ENCODE measurements at regions of chr5 and their contacts with region 1.

Region 1: DNA sequence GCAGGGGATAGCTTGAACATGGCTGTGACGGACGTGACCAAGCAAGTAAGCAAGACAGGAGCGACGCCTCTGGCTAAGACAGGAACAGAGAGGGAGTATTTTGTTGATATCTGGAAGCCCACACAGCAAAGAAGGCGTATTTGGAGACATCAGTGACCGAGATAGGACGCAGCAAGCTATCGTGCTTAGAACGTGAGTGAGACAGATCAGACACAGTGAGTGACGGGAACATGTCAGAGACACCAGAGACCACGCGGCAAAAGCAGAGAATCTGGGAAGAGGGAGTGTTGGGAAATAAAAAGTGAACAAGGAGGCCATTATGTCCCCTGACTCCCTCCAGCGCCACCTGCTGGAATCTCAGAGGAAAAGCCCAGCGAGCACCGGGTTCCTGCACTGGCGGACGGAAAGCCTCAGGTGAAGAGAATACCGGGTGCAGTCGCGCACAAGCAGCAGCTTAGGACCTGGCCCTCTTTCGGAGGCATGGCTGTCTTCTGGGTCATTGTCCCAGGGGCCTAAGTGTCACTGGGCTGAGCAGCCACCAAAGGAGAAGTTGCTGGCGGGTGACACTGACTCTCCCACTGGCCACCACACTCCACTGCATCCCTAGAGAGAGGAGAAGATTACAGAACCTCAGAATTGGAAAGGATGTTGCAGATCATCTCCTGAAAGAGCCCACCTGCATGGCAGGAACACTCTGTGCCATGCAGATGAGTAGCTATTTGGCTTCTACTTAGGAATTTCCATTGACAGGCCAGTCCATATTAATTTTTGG is 99.1 kb downstream of the FBXO38 start:
- DNase-seq: peak; percentile 13 to 65 (median 55)
- ATAC-seq: peak; percentile 42
- H3K4me3 ChIP-seq: no peak overlapping the region
- H3K4me3 Mint-ChIP-seq: peak overlapping the region; percentile 16
- H3K27ac ChIP-seq: no peak overlapping the region
- H3K27ac Mint-ChIP-seq: no peak overlapping the region
- H3K4me1 ChIP-seq: no peaks in the 10 kb centered on the region
- H3K4me1 Mint-ChIP-seq: peaks cover 5% of the 10 kb centered on the region
- H3K27me3 ChIP-seq: no peaks in the 10 kb centered on the region
- H3K27me3 Mint-ChIP-seq: peaks cover 26% of the 10 kb centered on the region
- CTCF ChIP-seq: peak; percentile 57

Region 2: DNA sequence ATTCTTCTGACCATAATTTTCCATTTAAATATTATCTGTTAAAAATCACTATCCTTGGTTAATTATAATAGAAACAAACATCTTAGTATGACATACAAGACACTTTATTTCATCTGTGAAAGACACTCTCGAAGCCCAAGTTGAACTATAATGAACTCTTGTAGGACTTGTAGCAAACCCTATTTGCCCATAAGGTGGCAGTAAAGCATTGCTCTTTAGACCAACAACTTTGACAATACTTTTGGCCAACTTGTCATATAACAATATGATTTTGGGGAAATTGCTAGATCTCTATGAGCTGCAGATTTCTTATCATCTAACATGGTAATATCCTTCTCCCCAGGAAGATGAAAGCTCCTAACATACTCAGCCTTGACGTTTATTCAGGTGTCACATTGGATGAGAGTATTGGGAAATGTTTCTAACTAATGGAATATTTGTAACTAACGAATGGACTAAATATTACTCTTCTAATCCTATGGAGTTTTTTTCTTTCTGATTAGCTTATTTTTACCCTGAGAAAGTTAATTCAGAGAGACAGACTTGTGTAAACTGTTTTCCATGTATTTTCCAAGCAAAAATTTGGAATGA is 303.5 kb before region 1 on chr5:
- CTCF ChIA-PET with region 1: interaction called, 7 read pairs
- POLR2A ChIA-PET with region 1: no interaction called
- intact Hi-C with region 1: loop called (anchors 2 to 5 kb)
- DNase-seq: peak in 3 of 9 experiments; percentile 5 to 64 (median 51)
- ATAC-seq: no peak
- H3K4me3 ChIP-seq: no peak overlapping the region
- H3K4me3 Mint-ChIP-seq: no peak overlapping the region
- H3K27ac ChIP-seq: no peak overlapping the region
- H3K27ac Mint-ChIP-seq: no peak overlapping the region
- H3K4me1 ChIP-seq: no peaks in the 10 kb centered on the region
- H3K4me1 Mint-ChIP-seq: no peaks in the 10 kb centered on the region
- H3K27me3 ChIP-seq: no peaks in the 10 kb centered on the region
- H3K27me3 Mint-ChIP-seq: peaks cover 12% of the 10 kb centered on the region
- CTCF ChIP-seq: peak; percentile 62

Region 3: DNA sequence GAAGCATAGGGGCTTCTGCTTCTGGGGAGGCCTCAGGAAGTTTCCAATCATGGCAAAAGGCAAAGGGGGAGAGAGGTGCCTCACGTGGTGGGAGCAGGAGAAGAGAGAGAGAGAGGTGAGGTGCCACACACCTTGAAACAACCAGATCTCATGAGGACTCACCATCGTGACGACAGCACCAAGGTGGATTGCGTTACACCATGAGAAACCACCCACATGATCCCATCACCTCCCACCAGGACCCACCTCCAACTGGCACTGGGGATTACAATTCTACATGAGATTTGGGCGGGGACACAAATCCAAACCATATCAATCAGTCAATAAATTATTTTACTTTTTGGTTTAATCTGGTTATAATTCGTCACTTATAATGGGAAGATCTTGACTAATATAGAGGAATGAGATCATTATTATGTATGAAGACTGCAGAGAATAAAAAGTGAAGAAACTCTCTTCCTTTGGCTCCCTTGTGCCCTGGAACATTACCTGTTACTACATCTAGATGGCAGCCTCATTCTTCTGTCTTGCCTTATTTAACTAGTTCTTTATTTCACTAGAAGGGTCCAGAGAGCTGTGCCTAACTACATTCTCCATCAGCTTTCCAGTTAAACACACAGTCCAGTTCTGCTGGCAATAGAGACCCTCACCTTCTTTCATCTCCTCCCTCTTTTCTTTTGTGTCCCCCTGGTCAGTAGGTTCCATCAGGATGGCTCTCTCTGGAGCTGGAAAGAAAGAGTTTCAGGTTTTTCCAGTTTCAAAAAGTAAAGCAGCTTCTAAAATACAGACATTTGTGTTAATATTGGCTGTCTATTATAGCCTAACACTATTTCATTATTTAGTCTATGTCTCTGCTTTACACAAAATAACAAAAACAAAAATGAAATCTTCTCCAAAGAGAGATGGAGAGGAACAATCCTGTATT is 192.3 kb before region 1 on chr5:
- CTCF ChIA-PET with region 1: no interaction called
- POLR2A ChIA-PET with region 1: no interaction called
- intact Hi-C with region 1: loop called in 1 of 2 experiments (anchors 10 kb)
- DNase-seq: peak in 2 of 9 experiments; percentile 3 to 24
- ATAC-seq: no peak
- H3K4me3 ChIP-seq: no peak overlapping the region
- H3K4me3 Mint-ChIP-seq: no peak overlapping the region
- H3K27ac ChIP-seq: no peak overlapping the region
- H3K27ac Mint-ChIP-seq: no peak overlapping the region
- H3K4me1 ChIP-seq: no peaks in the 10 kb centered on the region
- H3K4me1 Mint-ChIP-seq: no peaks in the 10 kb centered on the region
- H3K27me3 ChIP-seq: no peaks in the 10 kb centered on the region
- H3K27me3 Mint-ChIP-seq: peaks cover 7% of the 10 kb centered on the region
- CTCF ChIP-seq: peak; percentile 26

Region 4: GRCh38 chr5:148532962-148533670 is 50.2 kb after region 1 on chr5:
- CTCF ChIA-PET with region 1: no interaction called
- POLR2A ChIA-PET with region 1: no interaction called
- intact Hi-C with region 1: no loop called
- DNase-seq: no peak
- ATAC-seq: no peak
- H3K4me3 ChIP-seq: no peak overlapping the region
- H3K4me3 Mint-ChIP-seq: no peak overlapping the region
- H3K27ac ChIP-seq: no peak overlapping the region
- H3K27ac Mint-ChIP-seq: no peak overlapping the region
- H3K4me1 ChIP-seq: no peaks in the 10 kb centered on the region
- H3K4me1 Mint-ChIP-seq: no peaks in the 10 kb centered on the region
- H3K27me3 ChIP-seq: no peaks in the 10 kb centered on the region
- H3K27me3 Mint-ChIP-seq: peaks cover 15% of the 10 kb centered on the region
- CTCF ChIP-seq: no peak

Measured in CD8-positive, alpha-beta T cell (primary cell).